Lower leg skin (tissue), 4 donors: ENCODE measurements at regions of chr9 and their contacts with region 1.

Region 1: DNA sequence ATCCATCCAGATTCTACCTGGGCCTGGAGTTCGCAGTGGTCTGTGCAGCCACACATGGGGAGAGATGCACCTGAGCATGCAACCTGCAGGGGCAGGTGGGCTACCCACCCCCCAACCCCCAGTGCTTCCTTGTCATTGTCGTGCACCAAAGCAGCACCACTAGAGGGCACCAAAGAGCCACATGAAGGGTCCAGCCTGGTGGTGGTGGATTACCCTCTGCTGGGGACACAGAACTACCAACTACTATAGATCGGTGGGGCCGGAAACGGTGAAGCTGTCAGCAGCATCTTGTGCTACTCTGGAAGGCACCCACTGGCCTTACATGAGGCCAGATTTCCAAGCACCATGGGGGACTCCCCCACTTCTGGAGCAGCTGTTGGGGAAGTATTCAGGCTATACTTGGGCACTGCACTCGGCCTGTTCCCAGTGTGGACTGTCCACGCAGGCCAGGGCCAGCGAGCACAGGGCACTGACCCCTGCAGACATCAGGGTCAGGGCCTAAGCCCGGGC is 60.2 kb upstream of the TBC1D2 start:
- DNase-seq: peak; percentile 67 to 88
- H3K4me3 ChIP-seq: no peak overlapping the region
- CTCF ChIP-seq: no peak
- POLR2A ChIP-seq: no peak

Region 2: DNA sequence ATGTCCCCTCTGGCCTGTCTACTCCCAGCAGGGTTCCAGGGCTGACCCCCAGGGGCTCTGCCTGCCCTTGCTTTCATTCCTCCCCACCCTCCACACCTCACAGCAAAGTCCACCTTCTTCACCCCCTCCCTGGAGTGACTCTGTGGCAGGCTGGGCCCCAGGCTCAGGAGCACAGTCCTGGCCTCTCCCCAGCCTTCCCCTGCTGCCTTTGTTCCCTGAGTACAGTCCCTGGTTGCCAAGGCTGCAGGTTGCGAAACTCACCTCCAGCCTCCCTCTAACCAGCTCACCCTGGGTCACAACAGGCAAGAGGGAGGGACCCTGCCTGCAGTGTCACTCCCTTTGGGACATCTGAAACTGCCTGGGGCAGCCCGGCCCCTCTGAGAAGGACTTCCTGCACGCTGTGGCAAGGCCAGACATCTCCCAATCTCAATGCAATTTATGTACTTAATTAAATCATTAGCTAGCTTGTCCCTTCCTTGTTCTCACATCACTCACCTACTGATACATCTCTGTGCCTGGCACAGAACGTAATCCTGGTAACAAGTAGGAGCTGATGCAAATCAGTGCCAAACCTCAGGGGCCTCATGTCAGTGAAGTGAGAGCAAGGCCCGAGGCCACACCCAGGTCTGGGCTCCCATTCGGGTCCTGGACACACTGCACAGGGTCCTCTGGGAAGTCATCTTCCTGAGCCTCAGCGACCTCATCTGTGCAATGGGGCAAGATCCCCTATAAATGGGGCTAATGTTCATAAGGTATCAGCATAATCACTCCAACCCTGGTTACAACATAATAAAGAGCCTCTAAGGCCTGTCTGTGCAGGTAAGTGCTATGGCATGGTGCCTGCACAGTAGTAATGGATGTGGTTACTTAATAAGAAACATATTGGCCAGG is 169.3 kb before region 1 on chr9:
- intact Hi-C with region 1: no loop called
- DNase-seq: peak; percentile 82 to 89
- H3K4me3 ChIP-seq: no peak overlapping the region
- CTCF ChIP-seq: peak in 1 of 3 donors; percentile 40
- POLR2A ChIP-seq: no peak

Region 3: GRCh38 chr9:98781588-98782383 is 466.2 kb after region 1 on chr9:
- intact Hi-C with region 1: loop called (anchors 10 kb)
- DNase-seq: peak in 1 of 2 donors; percentile 71
- H3K4me3 ChIP-seq: no peak overlapping the region
- CTCF ChIP-seq: no peak
- POLR2A ChIP-seq: no peak